ENCODE measurements at regions of chr2 and their contacts with region 1.

Region 1: DNA sequence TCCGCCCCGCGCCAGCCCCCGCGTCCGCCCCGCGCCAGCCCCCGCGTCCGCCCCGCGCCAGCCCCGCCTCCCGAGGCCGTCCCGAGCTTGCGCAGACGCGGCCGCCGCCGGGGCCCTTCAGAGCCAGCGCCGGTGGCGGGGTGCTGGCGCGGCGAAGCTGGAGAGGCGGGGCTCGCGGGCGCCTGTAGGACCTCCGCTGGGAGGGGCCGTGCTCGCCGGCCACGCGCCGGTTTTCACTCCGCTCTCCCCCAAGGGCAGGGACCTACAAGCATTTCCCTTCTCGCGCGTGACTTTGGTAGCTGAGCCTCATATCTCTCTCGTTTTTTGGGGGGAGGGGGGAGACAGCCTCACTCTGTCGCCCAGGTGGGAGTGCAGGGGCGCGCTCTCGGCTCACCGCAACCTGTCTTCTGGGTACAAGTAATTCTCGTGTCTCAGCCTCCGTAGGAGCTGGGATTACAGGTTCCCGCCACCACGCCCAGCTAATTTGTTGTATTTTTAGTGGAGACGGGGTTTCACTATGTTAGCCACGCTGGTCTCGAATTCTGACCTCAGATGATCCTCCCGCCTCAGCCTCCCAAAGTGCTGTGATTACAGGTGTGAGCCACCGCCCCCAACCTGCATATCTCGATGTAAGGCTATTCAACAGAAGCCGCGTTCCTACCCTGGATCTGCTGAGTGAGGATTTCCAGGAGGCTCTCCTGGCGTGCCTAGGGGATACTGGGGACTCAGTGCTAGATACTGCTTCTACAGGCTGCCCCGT is at the start of gene ZNF514:
- DNase-seq: peak; percentile 69 to 85 (median 72)
- ATAC-seq: peak; percentile 95
- H3K4me3 ChIP-seq: peak within 1 kb of the TSS; percentile 83
- H3K4me3 Mint-ChIP-seq: peak within 1 kb of the TSS; percentile 86 to 94 (median 90)
- H3K27ac ChIP-seq: peak within 1 kb of the TSS; percentile 75
- H3K27ac Mint-ChIP-seq: peak within 1 kb of the TSS; percentile 82 to 94 (median 87)
- H3K4me1 ChIP-seq: peaks cover 0 to 13% of the 10 kb centered on the region in 2 donors
- H3K4me1 Mint-ChIP-seq: peaks cover 12 to 34% (median 30%) of the 10 kb centered on the region in 7 donors
- H3K27me3 ChIP-seq: no peaks in the 10 kb centered on the region
- H3K27me3 Mint-ChIP-seq: no peaks in the 10 kb centered on the region
- total RNA-seq, gene ZNF514: 10.6 to 39.9 (median 16.6) TPM

Region 2: GRCh38 chr2:95087379-95087778 is 72.5 kb before region 1 on chr2:
- CTCF ChIA-PET with region 1: no interaction called
- POLR2A ChIA-PET with region 1: interaction called, 3 read pairs
- intact Hi-C with region 1: loop called in 1 of 2 experiments (anchors 5 kb)
- DNase-seq: no peak
- ATAC-seq: no peak
- H3K4me3 ChIP-seq: no peak overlapping the region
- H3K4me3 Mint-ChIP-seq: no peak overlapping the region
- H3K27ac ChIP-seq: no peak overlapping the region
- H3K27ac Mint-ChIP-seq: peak overlapping the region in 1 of 9 donors; percentile 12
- H3K4me1 ChIP-seq: no peaks in the 10 kb centered on the region
- H3K4me1 Mint-ChIP-seq: peaks cover 0 to 2% (median 0%) of the 10 kb centered on the region in 7 donors
- H3K27me3 ChIP-seq: no peaks in the 10 kb centered on the region
- H3K27me3 Mint-ChIP-seq: no peaks in the 10 kb centered on the region

Region 3: DNA sequence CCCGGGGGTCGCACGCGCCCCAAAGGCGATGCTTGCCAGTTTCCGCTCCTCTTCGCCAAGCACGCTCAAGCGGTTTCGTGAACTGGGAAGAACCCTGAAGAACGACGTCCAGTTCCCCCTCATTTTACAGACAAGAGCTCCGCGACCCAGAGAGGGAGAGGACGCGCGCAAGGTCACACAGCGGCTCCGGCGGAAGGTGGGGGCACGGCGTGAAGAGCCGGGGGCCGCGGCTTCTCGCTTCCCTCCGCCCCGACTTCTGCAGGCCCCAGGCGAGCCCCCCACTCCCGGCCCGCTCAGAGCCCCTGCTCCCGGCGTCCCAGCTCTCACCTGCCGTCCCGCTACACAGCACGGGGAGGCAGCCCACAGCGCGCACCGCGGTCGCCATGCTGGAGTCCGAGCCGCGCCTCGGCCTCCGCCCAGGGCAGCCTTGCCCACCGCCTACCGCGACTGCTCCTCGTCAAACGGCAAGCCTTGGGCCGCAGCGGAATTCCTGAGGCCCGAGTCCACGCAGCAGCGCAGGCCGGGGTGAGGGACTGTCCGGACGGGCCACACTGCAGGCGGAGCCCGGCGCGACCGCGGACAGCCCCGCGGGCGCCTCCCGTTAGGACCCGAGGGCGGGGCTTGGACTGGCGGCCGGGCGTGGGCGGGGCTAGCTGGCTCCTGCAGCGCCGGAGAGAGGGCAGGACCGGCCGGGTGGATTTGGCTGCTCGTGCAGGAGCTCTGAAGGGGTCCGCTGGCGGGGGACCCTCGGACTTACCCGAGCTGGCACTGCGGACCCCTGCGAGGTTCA is 38.3 kb before region 1 on chr2 and contains the start of gene MRPS5:
- CTCF ChIA-PET with region 1: interaction called, 10 read pairs
- POLR2A ChIA-PET with region 1: interaction called, 29 read pairs
- intact Hi-C with region 1: loop called (anchors 1 kb)
- DNase-seq: peak; percentile 63 to 95 (median 72)
- ATAC-seq: peak; percentile 98
- H3K4me3 ChIP-seq: peak within 1 kb of the TSS; percentile 74
- H3K4me3 Mint-ChIP-seq: peak within 1 kb of the TSS; percentile 91 to 99 (median 96)
- H3K27ac ChIP-seq: peak within 1 kb of the TSS; percentile 91
- H3K27ac Mint-ChIP-seq: peak within 1 kb of the TSS; percentile 92 to 97 (median 94)
- H3K4me1 ChIP-seq: peaks cover 19 to 27% of the 10 kb centered on the region in 2 donors
- H3K4me1 Mint-ChIP-seq: peaks cover 38 to 58% (median 52%) of the 10 kb centered on the region in 7 donors
- H3K27me3 ChIP-seq: no peaks in the 10 kb centered on the region
- H3K27me3 Mint-ChIP-seq: no peaks in the 10 kb centered on the region
- total RNA-seq, gene MRPS5: 26.3 to 72.9 (median 60.5) TPM

Region 4: GRCh38 chr2:95709831-95710230 is 550.0 kb after region 1 on chr2:
- CTCF ChIA-PET with region 1: no interaction called
- POLR2A ChIA-PET with region 1: no interaction called
- intact Hi-C with region 1: no loop called
- DNase-seq: no peak
- ATAC-seq: no peak
- H3K4me3 ChIP-seq: no peak overlapping the region
- H3K4me3 Mint-ChIP-seq: no peak overlapping the region
- H3K27ac ChIP-seq: no peak overlapping the region
- H3K27ac Mint-ChIP-seq: no peak overlapping the region
- H3K4me1 ChIP-seq: no peaks in the 10 kb centered on the region
- H3K4me1 Mint-ChIP-seq: peaks cover 0 to 7% (median 0%) of the 10 kb centered on the region in 7 donors
- H3K27me3 ChIP-seq: no peaks in the 10 kb centered on the region
- H3K27me3 Mint-ChIP-seq: peaks cover 0 to 14% (median 4%) of the 10 kb centered on the region in 5 donors